Left colon (tissue), 2 donors: ENCODE measurements at regions of chr1 and their contacts with region 1.

Region 1: GRCh38 chr1:184805667-184806295 is 51.1 kb upstream of the EDEM3 start:
- DNase-seq: peak; percentile 78 to 94
- ATAC-seq: peak; percentile 98

Region 2: GRCh38 chr1:184754476-184755225 is 51.1 kb before region 1 on chr1 and contains the start of gene EDEM3:
- intact Hi-C with region 1: loop called in 1 of 2 experiments (anchors 2 kb)
- DNase-seq: peak; percentile 97 to 100
- ATAC-seq: peak; percentile 89
- total RNA-seq, gene EDEM3: 68.6 to 81.6 TPM

Region 3: DNA sequence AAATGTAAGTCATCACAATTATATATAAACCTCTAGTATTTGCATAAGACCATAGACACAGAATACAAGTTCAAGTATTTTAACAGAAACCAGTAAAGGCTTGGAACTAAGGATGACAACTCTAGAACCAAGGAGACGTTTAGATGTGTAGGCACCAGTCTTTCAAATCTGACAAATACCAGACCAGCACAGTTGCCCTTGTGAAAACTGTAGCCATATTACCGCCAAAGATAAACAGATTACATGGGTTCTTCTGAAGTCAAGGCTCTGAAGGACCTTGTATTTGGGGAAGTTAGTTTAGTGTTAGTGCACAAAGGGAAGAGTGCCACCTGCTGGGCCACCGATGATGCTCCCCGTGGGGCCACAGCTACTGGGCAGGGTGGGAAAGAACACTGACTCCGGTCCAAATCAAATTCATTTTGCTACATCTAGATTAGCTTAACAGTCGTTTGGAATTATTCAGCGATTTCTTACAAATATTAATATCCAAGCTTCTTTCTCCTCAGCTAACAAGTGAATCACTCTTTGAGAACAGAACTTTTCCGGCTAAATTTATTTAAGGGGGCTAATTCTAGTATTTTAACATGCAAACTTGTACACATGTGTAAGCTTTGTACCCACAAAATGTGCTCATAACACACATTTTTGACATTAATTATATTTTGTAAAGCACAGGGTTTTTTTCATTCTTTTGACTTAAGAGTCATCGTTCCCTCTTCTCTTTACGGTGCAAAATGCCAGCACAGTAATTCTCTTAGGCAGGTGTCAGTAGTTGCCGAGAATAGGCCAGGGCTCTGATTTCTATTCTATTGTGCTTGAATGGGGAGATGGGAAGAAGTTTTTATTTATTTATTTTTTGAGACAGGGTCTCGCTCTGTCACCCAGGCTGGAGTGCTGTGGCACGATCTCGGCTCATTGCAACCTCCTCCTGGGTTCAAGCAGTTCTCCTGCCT is 176.5 kb after region 1 on chr1:
- intact Hi-C with region 1: loop called (anchors 2 to 10 kb)
- DNase-seq: peak; percentile 67 to 81
- ATAC-seq: peak; percentile 89

Region 4: DNA sequence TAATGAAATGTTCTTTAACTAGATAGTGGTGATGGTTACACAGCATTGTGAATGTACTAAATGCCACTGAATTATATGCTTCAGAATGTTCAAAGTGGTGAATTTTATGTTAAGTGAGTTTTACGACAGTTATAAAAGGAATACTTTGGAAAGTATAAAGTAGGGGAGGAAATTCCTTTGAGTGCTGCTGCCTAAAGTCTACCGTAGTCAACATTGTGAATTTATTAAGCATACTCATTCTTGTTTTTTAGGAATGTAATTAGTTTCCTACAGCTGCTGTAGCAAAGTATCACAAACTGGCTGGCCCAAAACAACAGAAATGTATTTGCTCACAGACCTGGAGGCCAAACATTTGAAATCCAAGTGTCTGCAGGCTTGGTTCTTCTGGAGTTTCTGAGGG is 424.2 kb after region 1 on chr1:
- intact Hi-C with region 1: no loop called
- DNase-seq: no peak
- ATAC-seq: no peak